Right ventricle myocardium inferior (tissue), 1 donor: ENCODE measurements at regions of chr2 and their contacts with region 1.

Region 1: GRCh38 chr2:70789304-70790135 is 923 bp downstream of the FIGLA start:
- DNase-seq: peak; percentile 81
- ATAC-seq: peak; percentile 69

Region 2: DNA sequence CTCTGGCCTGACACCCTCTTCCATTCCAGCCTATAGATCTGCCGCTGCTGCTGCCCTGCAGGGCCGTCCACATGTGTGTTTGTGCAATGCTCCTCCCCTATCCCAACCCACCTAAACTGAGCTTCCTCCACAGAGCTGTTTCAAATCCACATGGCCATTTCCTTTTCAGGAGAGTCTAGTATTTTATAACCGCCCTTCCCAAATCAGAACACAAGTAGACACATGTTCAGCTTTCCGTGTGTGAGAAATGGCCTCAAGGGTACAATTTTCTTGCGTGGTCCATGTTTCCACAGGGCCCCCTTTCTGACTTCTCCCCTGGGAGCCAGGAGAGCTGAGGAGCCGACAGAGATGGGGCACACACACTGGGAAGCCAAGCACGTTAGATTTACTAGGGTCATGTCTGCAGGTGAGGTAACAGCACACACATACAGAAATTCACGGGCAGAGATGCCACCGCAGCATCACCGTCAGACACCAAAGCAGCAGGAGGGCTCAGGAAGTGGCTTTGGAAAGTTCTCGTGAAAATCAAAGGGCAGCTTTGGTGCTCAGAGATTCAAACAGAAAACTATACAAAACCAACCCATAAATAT is 133.0 kb before region 1 on chr2:
- intact Hi-C with region 1: loop called (anchors 5 kb)
- DNase-seq: no peak
- ATAC-seq: no peak

Region 3: GRCh38 chr2:70861777-70862625 is 72.5 kb after region 1 on chr2:
- intact Hi-C with region 1: loop called (anchors 5 kb)
- DNase-seq: peak; percentile 85
- ATAC-seq: peak; percentile 80

Region 4: GRCh38 chr2:70984576-70985282 is 195.2 kb after region 1 on chr2:
- intact Hi-C with region 1: no loop called
- DNase-seq: peak; percentile 89
- ATAC-seq: peak; percentile 63